ENCODE measurements at regions of chr4 and their contacts with region 1.

Region 1: GRCh38 chr4:48141048-48141447 is 7.0 kb upstream of the TXK start:
- DNase-seq: peak; percentile 71
- H3K4me3 ChIP-seq: no peak overlapping the region
- H3K27ac ChIP-seq: no peak overlapping the region
- H3K4me1 ChIP-seq: peaks cover 17% of the 10 kb centered on the region
- H3K27me3 ChIP-seq: no peaks in the 10 kb centered on the region
- CTCF ChIP-seq: peak; percentile 68

Region 2: GRCh38 chr4:47926639-47927258 is 214.3 kb before region 1 on chr4:
- CTCF ChIA-PET with region 1: no interaction called
- POLR2A ChIA-PET with region 1: no interaction called
- intact Hi-C with region 1: loop called (anchors 5 kb)
- DNase-seq: peak; percentile 82
- H3K4me3 ChIP-seq: peak overlapping the region; percentile 21
- H3K27ac ChIP-seq: no peak overlapping the region
- H3K4me1 ChIP-seq: peaks cover 6% of the 10 kb centered on the region
- H3K27me3 ChIP-seq: peaks cover 17% of the 10 kb centered on the region
- CTCF ChIP-seq: peak; percentile 88

Region 3: DNA sequence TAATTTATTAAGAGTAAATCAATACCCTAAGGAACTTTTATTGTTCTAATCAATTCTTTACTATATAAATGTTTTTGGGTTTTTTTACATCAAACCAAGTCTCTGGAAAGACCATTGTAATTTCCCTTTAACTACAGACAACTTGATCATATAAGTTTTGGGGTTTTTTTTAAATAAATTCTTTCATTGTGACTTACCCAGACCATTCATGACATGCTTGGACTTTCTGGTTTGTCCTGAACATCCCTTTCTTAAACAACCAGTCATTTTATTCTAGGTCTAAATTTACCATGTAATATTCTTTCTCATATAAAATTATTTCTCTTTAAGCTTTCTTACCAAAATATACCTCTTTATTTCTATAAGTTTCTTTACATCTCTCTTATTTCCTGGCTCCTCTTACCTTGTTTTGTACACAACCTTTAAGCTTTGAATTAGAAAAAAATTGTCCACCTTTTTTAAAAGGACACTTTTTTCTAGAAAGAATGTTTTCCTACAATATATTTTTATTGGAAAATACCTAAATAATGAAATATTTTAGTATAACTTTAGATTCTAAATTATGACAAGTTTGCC is 132.9 kb before region 1 on chr4:
- CTCF ChIA-PET with region 1: no interaction called
- POLR2A ChIA-PET with region 1: no interaction called
- intact Hi-C with region 1: loop called (anchors 1 kb)
- DNase-seq: peak; percentile 9
- H3K4me3 ChIP-seq: no peak overlapping the region
- H3K27ac ChIP-seq: no peak overlapping the region
- H3K4me1 ChIP-seq: no peaks in the 10 kb centered on the region
- H3K27me3 ChIP-seq: no peaks in the 10 kb centered on the region
- CTCF ChIP-seq: no peak

Region 4: GRCh38 chr4:48033825-48034413 is 107.1 kb before region 1 on chr4:
- CTCF ChIA-PET with region 1: no interaction called
- POLR2A ChIA-PET with region 1: no interaction called
- intact Hi-C with region 1: loop called (anchors 10 kb)
- DNase-seq: peak; percentile 64
- H3K4me3 ChIP-seq: no peak overlapping the region
- H3K27ac ChIP-seq: no peak overlapping the region
- H3K4me1 ChIP-seq: no peaks in the 10 kb centered on the region
- H3K27me3 ChIP-seq: no peaks in the 10 kb centered on the region
- CTCF ChIP-seq: peak; percentile 69